ENCODE measurements at regions of chr22 and their contacts with region 1.

Region 1: DNA sequence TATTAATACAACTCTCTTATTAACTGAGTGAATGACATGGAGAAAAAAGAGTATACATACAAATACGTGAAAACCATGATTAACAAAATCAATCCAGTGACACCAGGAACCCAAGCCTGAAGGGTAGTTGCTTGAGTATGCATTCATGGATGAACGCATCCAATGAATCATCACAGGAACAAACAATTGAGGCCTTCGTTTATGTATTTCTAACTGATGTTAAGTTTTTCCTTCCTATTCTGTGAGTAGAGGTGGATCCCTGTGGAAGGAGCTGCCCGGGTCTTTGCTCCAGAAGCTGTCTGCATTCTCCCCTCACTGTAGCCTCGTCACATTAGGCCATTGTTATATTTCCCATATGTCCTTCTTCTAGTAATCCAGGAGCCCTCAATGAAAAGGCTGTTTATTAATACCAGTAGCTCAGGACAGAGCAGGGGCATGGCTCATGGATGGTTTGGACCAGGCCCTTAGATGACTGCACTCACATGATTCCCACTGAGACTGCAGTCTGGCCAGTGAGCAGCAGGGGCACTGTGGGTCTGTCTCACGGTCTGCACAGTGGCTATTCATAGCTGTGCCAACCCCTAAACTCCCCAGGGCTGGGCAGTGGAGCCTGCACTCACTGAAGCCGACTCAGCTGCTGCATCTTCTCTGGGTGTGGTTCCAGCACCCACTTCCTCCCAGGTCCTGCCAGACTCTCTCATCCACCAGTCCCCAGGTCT is 128.1 kb upstream of the TOP3B start:
- DNase-seq: peak; percentile 94
- ATAC-seq: peak; percentile 96
- H3K4me3 ChIP-seq: peak overlapping the region in 1 of 5 experiments; percentile 48
- H3K4me3 Mint-ChIP-seq: peak overlapping the region; percentile 78
- H3K27ac ChIP-seq: peak overlapping the region; percentile 78 to 93
- H3K27ac Mint-ChIP-seq: peak overlapping the region; percentile 97
- H3K4me1 ChIP-seq: peaks cover 42 to 44% of the 10 kb centered on the region in 2 donors
- H3K4me1 Mint-ChIP-seq: peaks cover 46% of the 10 kb centered on the region
- H3K27me3 ChIP-seq: no peaks in the 10 kb centered on the region
- H3K27me3 Mint-ChIP-seq: no peaks in the 10 kb centered on the region
- CTCF ChIP-seq: peak; percentile 80

Region 2: GRCh38 chr22:22037740-22038139 is 73.0 kb before region 1 on chr22:
- CTCF ChIA-PET with region 1: interaction called, 84 read pairs
- POLR2A ChIA-PET with region 1: interaction called, 5 read pairs
- intact Hi-C with region 1: no loop called
- DNase-seq: no peak
- ATAC-seq: no peak
- H3K4me3 ChIP-seq: no peak overlapping the region
- H3K4me3 Mint-ChIP-seq: peak overlapping the region; percentile 21
- H3K27ac ChIP-seq: peak overlapping the region; percentile 75 to 81
- H3K27ac Mint-ChIP-seq: peak overlapping the region; percentile 86
- H3K4me1 ChIP-seq: peaks cover 51 to 69% of the 10 kb centered on the region in 2 donors
- H3K4me1 Mint-ChIP-seq: peaks cover 83% of the 10 kb centered on the region
- H3K27me3 ChIP-seq: no peaks in the 10 kb centered on the region
- H3K27me3 Mint-ChIP-seq: no peaks in the 10 kb centered on the region
- CTCF ChIP-seq: no peak

Region 3: DNA sequence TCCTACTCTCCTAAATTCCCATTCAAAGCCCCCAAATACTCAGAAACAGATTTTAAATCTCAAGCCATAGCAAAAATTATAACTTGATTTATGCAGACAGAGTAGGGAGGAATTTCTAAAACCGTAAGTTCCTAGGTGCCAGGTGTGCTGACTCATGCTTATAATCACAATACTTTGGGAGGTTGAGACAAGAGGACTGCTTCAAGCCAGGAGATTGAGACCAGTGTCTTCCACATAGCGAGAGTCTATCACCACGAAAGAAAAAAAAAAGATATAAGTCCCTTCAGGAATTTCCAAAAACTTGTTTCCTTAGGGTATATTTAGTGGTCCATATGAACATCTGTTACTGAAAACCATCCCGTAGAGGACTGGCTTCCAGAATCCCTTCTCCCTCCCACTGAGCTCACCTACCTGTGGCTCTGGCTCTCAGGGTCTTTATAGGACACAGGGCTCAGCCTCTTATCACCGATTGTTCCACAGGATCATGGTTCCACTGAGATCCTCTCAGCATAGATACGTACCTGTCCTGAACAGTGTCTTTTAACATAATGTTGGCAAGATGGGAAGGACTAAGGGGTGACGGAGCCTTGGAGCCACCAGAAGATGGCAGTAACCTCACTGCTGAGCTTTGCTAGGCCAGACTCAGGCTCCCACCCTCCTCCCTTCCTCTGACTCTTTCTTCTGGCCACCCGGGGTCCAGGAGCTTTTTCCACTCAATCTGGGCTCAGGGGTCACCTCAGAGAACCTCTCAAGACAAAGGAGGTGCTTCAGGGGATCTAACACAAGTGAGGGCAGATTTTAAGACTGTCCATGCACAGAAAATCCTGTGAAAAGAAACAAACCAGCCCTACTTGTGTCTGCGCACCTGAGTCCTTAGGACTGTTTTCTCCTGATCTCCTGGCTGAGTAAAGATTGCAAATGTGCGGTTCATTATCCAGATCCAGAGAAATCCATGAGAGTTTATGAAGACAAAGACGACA is 10.6 kb before region 1 on chr22:
- CTCF ChIA-PET with region 1: interaction called, 47 read pairs
- POLR2A ChIA-PET with region 1: no interaction called
- intact Hi-C with region 1: loop called (anchors 1 kb)
- DNase-seq: peak; percentile 49
- ATAC-seq: peak; percentile 32
- H3K4me3 ChIP-seq: no peak overlapping the region
- H3K4me3 Mint-ChIP-seq: peak overlapping the region; percentile 60
- H3K27ac ChIP-seq: peak overlapping the region; percentile 91 to 93
- H3K27ac Mint-ChIP-seq: peak overlapping the region; percentile 97
- H3K4me1 ChIP-seq: peaks cover 33 to 36% of the 10 kb centered on the region in 2 donors
- H3K4me1 Mint-ChIP-seq: peaks cover 53% of the 10 kb centered on the region
- H3K27me3 ChIP-seq: no peaks in the 10 kb centered on the region
- H3K27me3 Mint-ChIP-seq: no peaks in the 10 kb centered on the region
- CTCF ChIP-seq: peak; percentile 39

Region 4: GRCh38 chr22:22156716-22157347 is 46.1 kb after region 1 on chr22:
- CTCF ChIA-PET with region 1: interaction called, 31 read pairs
- POLR2A ChIA-PET with region 1: interaction called, 7 read pairs
- intact Hi-C with region 1: loop called (anchors 1 kb)
- DNase-seq: peak; percentile 91
- ATAC-seq: peak; percentile 79
- H3K4me3 ChIP-seq: peak overlapping the region in 2 of 5 experiments; percentile 11 to 17
- H3K4me3 Mint-ChIP-seq: peak overlapping the region; percentile 86
- H3K27ac ChIP-seq: peak overlapping the region; percentile 92
- H3K27ac Mint-ChIP-seq: peak overlapping the region; percentile 99
- H3K4me1 ChIP-seq: peaks cover 42 to 53% of the 10 kb centered on the region in 2 donors
- H3K4me1 Mint-ChIP-seq: peaks cover 51% of the 10 kb centered on the region
- H3K27me3 ChIP-seq: no peaks in the 10 kb centered on the region
- H3K27me3 Mint-ChIP-seq: no peaks in the 10 kb centered on the region
- CTCF ChIP-seq: peak; percentile 92

Region 5: DNA sequence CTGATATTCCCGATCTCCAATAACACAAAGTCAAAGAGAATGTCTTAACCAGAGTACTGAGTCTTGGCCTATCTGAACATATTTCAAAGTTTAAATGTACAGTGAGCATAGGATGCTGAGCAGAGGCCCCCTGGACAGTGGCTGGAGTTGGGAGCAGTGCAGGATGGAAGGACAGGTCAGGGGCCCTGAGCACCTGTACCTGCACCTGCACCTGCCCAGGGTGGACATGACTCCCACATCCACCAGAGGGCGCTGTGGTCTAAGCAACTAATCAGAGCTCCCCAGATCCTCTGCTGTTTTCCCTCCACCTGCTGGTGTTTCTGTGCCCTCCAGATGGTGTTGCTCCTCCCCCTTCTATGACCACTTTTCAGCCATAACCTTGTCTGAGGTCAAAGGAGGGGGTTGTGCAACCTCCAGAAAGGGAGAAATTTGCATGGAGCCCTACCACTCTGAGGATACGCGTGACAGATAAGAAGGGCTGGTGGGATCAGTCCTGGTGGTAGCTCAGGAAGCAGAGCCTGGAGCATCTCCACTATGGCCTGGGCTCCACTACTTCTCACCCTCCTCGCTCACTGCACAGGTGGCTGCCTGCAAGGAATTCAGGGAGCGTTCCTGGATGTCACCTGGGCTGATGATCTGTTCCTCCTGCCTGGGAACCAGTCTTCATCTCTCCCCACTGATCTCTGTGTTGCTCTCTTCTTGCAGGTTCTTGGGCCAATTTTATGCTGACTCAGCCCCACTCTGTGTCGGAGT is 84.7 kb after region 1 on chr22:
- CTCF ChIA-PET with region 1: interaction called, 48 read pairs
- POLR2A ChIA-PET with region 1: interaction called, 9 read pairs
- intact Hi-C with region 1: loop called (anchors 1 kb)
- DNase-seq: peak; percentile 92
- ATAC-seq: peak; percentile 75
- H3K4me3 ChIP-seq: peak overlapping the region in 4 of 5 experiments; percentile 3 to 38 (median 28)
- H3K4me3 Mint-ChIP-seq: peak overlapping the region; percentile 82
- H3K27ac ChIP-seq: peak overlapping the region; percentile 54 to 75
- H3K27ac Mint-ChIP-seq: peak overlapping the region; percentile 91
- H3K4me1 ChIP-seq: peaks cover 41 to 46% of the 10 kb centered on the region in 2 donors
- H3K4me1 Mint-ChIP-seq: peaks cover 62% of the 10 kb centered on the region
- H3K27me3 ChIP-seq: no peaks in the 10 kb centered on the region
- H3K27me3 Mint-ChIP-seq: no peaks in the 10 kb centered on the region
- CTCF ChIP-seq: peak; percentile 93

Region 6: DNA sequence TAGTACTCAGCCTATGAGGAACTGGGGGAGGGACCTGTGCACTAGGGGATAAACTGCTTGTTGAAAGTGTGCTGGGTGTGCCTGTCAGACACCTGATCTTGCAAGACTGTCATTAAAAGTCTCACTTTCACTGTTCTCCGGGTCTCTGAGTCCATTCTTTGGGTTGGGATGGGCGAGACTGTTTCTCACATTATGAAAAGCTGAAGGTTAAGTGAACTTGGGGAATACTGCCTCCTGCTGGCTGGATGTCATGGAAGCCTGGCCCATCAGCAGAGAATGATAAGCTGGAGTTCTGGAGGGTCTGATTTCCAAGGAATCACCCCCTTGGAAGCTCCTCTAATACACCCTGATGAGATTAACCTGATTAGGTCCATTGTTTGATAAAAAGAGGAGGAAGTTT is 124.9 kb after region 1 on chr22:
- CTCF ChIA-PET with region 1: interaction called, 23 read pairs
- POLR2A ChIA-PET with region 1: no interaction called
- intact Hi-C with region 1: no loop called
- DNase-seq: peak; percentile 67
- ATAC-seq: peak; percentile 24
- H3K4me3 ChIP-seq: no peak overlapping the region
- H3K4me3 Mint-ChIP-seq: peak overlapping the region; percentile 37
- H3K27ac ChIP-seq: no peak overlapping the region
- H3K27ac Mint-ChIP-seq: peak overlapping the region; percentile 53
- H3K4me1 ChIP-seq: peaks cover 16 to 27% of the 10 kb centered on the region in 2 donors
- H3K4me1 Mint-ChIP-seq: peaks cover 24% of the 10 kb centered on the region
- H3K27me3 ChIP-seq: no peaks in the 10 kb centered on the region
- H3K27me3 Mint-ChIP-seq: no peaks in the 10 kb centered on the region
- CTCF ChIP-seq: peak; percentile 48